GM12878 (cell line): ENCODE measurements at regions of chr4 and their contacts with region 1.

Region 1: GRCh38 chr4:121307445-121308327 is 73.1 kb downstream of the QRFPR start:
- DNase-seq: peak; percentile 51
- ATAC-seq: peak; percentile 98
- H3K4me3 ChIP-seq: no peak overlapping the region
- H3K27ac ChIP-seq: no peak overlapping the region
- H3K4me1 ChIP-seq: peaks cover 8% of the 10 kb centered on the region
- H3K27me3 ChIP-seq: no peaks in the 10 kb centered on the region; a peak in 1 of 4 replicates
- CTCF ChIP-seq: peak; percentile 80 to 85 (median 83)
- EP300 ChIP-seq: 0 out of 4 replicates have a peak, but pooled peaks of 1 of the 2 experiments have one; percentile 16
- POLR2A ChIP-seq: no peak
- RAD21 ChIP-seq: peak; percentile 99

Region 2: GRCh38 chr4:120156120-120156718 is 1151.5 kb before region 1 on chr4:
- CTCF ChIA-PET with region 1: no interaction called
- POLR2A ChIA-PET with region 1: no interaction called
- RAD21 ChIA-PET with region 1: interaction called, 3 read pairs
- SMC1A ChIA-PET with region 1: interaction called, 5 read pairs
- in situ Hi-C with region 1: loop called (anchors 25 kb)
- intact Hi-C with region 1: loop called (anchors 5 kb)
- DNase-seq: peak; percentile 7
- ATAC-seq: peak; percentile 65
- H3K4me3 ChIP-seq: no peak overlapping the region
- H3K27ac ChIP-seq: no peak overlapping the region
- H3K4me1 ChIP-seq: no peaks in the 10 kb centered on the region
- H3K27me3 ChIP-seq: no peaks in the 10 kb centered on the region
- CTCF ChIP-seq: peak; percentile 39 to 61 (median 52); a peak in 5 of 6 replicates
- EP300 ChIP-seq: no peak
- POLR2A ChIP-seq: no peak
- RAD21 ChIP-seq: peak; percentile 82

Region 3: GRCh38 chr4:121192480-121192879 is 115.2 kb before region 1 on chr4:
- CTCF ChIA-PET with region 1: interaction called, 89 read pairs
- POLR2A ChIA-PET with region 1: no interaction called
- RAD21 ChIA-PET with region 1: interaction called, 19 read pairs
- SMC1A ChIA-PET with region 1: interaction called, 59 read pairs
- in situ Hi-C with region 1: loop called (anchors 5 kb)
- intact Hi-C with region 1: loop called (anchors 1 kb)
- DNase-seq: peak; percentile 39
- ATAC-seq: peak; percentile 43
- H3K4me3 ChIP-seq: no peak overlapping the region
- H3K27ac ChIP-seq: no peak overlapping the region
- H3K4me1 ChIP-seq: peaks cover 4% of the 10 kb centered on the region
- H3K27me3 ChIP-seq: no peaks in the 10 kb centered on the region
- CTCF ChIP-seq: peak; percentile 65 to 84 (median 77); a peak in 5 of 6 replicates
- EP300 ChIP-seq: no peak
- POLR2A ChIP-seq: no peak
- RAD21 ChIP-seq: peak; percentile 99

Region 4: DNA sequence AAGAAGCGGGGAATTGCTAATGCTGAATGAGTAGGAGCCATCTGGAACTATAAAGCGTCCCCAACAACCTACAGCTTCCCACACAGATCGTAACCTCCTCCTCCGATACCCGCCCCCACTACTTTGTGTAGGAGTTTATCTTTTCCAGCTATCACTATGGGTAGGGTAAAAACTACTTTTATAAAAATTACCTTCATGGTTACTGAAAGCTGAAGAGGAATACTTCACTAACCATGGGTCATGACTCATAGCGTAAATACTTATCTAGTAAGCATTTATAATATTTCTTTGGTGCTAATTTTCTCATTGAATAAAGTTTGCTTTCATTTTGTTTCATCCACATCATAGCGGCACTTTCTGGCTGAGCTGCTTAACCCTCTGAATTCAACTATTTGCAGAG is 64.2 kb before region 1 on chr4:
- CTCF ChIA-PET with region 1: interaction called, 26 read pairs
- POLR2A ChIA-PET with region 1: no interaction called
- RAD21 ChIA-PET with region 1: no interaction called
- SMC1A ChIA-PET with region 1: interaction called, 12 read pairs
- in situ Hi-C with region 1: no loop called
- intact Hi-C with region 1: no loop called
- DNase-seq: no peak
- ATAC-seq: peak; percentile 63
- H3K4me3 ChIP-seq: no peak overlapping the region
- H3K27ac ChIP-seq: no peak overlapping the region
- H3K4me1 ChIP-seq: no peaks in the 10 kb centered on the region
- H3K27me3 ChIP-seq: no peaks in the 10 kb centered on the region; a peak in 1 of 4 replicates
- CTCF ChIP-seq: no peak
- EP300 ChIP-seq: no peak
- POLR2A ChIP-seq: no peak
- RAD21 ChIP-seq: no peak

Region 5: DNA sequence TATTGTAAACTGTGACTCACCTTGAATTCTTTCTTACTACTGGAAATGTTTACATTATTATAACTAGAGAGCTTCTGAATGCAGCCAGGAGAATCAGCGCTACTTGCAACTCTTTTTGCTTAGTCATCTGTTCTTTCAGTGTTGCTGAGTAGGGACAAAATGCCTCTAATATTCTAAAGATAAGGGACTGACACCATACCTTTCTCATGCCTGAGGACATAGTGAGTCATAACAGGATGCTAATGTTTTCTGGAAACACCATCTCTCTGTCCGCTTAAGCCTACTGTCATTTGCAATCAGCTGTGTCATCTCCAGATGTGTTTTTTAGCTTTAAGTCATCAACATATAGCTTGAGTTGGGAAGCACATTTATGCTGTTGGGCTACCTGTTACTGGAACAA is 35.2 kb before region 1 on chr4:
- CTCF ChIA-PET with region 1: interaction called, 14 read pairs
- POLR2A ChIA-PET with region 1: no interaction called
- RAD21 ChIA-PET with region 1: interaction called, 3 read pairs
- SMC1A ChIA-PET with region 1: interaction called, 15 read pairs
- in situ Hi-C with region 1: no loop called
- intact Hi-C with region 1: loop called (anchors 1 kb)
- DNase-seq: no peak
- ATAC-seq: peak; percentile 59
- H3K4me3 ChIP-seq: no peak overlapping the region
- H3K27ac ChIP-seq: no peak overlapping the region
- H3K4me1 ChIP-seq: no peaks in the 10 kb centered on the region
- H3K27me3 ChIP-seq: no peaks in the 10 kb centered on the region
- CTCF ChIP-seq: no peak
- EP300 ChIP-seq: no peak
- POLR2A ChIP-seq: no peak
- RAD21 ChIP-seq: no peak

Region 6: DNA sequence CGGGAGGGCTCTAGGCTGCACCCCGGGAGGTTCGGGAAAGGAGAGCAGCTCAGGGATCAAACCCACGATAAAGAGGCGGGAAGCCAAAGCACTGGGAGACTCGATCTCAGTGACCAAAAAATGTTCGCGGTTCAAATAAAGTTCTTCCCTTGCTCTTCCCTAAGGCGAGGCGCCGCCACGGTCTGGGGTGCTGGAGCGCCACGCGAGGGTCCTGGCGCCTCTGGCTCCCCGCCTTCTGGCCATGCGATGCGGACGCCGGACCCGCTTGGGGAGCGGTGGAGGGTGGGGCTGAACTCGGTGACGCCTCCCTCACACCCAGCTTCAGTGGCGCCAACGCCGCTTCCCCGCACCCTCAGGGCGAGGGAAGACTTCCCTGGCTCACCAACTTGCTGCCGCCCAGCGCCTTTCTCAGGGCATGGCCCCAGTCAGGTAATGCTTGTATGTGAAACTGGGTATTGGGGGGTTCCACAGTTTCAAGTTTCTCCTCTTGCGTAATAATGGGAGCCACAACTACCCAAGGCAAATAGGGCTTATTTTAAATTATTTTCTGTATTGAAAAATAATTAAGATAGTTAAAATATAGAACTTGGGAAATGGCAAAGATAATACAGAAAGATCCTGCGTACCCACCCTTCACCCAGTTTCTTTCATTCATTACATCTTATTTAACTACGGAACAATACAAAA is 73.2 kb after region 1 on chr4 and contains the start of gene QRFPR:
- CTCF ChIA-PET with region 1: no interaction called
- POLR2A ChIA-PET with region 1: no interaction called
- RAD21 ChIA-PET with region 1: no interaction called
- SMC1A ChIA-PET with region 1: no interaction called
- in situ Hi-C with region 1: no loop called
- intact Hi-C with region 1: no loop called
- DNase-seq: no peak
- ATAC-seq: no peak
- H3K4me3 ChIP-seq: no peak within 1 kb of the TSS
- H3K27ac ChIP-seq: no peak within 1 kb of the TSS
- H3K4me1 ChIP-seq: no peaks in the 10 kb centered on the region
- H3K27me3 ChIP-seq: peaks cover 3 to 12% of the 10 kb centered on the region in 2 experiments
- CTCF ChIP-seq: no peak
- EP300 ChIP-seq: no peak
- POLR2A ChIP-seq: no peak
- RAD21 ChIP-seq: no peak
- polyA plus RNA-seq, gene QRFPR: not detected